K562 (cell line): ENCODE measurements at regions of chr20 and their contacts with region 1.

Region 1: GRCh38 chr20:25399037-25399430 is 8.4 kb upstream of the ABHD12 start:
- DNase-seq: peak; percentile 21 to 60 (median 28)
- ATAC-seq: peak; percentile 87
- H3K4me3 ChIP-seq: no peak overlapping the region
- H3K27ac ChIP-seq: no peak overlapping the region
- H3K4me1 ChIP-seq: no peaks in the 10 kb centered on the region; a peak in 1 of 5 replicates
- H3K27me3 ChIP-seq: no peaks in the 10 kb centered on the region
- CTCF ChIP-seq: peak; percentile 46 to 66 (median 48); a peak in 5 of 6 replicates
- EP300 ChIP-seq: no peak
- POLR2A ChIP-seq: no peak
- RAD21 ChIP-seq: peak; percentile 68 to 80

Region 2: DNA sequence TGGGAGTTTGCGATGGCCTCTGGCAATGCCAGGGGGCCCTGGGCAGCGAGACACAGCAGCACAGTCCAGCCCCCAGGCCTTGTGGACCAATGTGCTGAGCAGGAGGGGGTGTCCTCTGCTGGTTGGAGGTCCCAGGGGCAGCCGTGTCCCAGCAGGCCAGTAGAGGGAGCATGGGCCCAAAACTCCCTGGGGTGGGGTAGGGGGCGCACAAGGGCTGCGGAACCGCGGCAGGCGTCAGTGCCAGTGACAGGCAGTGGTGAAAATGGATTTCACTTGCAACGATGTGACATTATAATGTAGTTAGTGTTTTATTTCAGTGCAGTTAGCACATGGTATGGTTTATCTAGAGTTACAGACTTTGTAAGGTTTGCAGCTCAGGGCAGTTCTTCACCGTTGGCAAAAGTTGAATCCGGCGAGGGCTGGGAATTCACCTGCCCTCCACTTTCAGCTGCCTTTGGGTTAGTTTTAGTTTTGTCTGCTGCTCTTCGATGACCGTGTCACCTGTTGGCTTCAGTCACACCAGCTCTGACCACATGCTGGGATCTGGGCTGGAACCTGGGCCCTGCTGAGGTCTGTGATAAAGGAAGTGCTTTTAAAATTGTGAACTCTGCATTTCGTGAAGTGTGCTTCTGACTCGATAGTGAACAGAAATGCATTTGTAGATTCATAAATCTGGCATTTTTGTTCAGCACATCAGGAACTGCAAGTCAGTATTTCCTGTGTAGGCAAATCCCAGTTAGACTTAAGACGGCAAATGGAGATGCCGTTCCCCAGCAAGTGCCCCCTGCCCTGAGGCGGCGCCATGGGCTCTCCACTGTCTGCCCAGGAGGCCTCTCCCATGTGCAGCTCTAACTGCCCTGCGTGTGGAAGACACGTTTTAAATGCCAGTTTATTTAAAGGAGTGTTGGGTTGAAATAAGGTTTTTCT is 104.3 kb before region 1 on chr20:
- CTCF ChIA-PET with region 1: interaction called, 13 read pairs
- POLR2A ChIA-PET with region 1: no interaction called
- in situ Hi-C with region 1: no loop called
- intact Hi-C with region 1: loop called (anchors 2 kb)
- DNase-seq: peak; percentile 72 to 83 (median 79)
- ATAC-seq: peak; percentile 96
- H3K4me3 ChIP-seq: no peak overlapping the region
- H3K27ac ChIP-seq: no peak overlapping the region
- H3K4me1 ChIP-seq: peaks cover 0 to 11% of the 10 kb centered on the region in 2 experiments; a peak in 3 of 5 replicates
- H3K27me3 ChIP-seq: no peaks in the 10 kb centered on the region
- CTCF ChIP-seq: peak; percentile 94 to 100 (median 100)
- EP300 ChIP-seq: no peak
- POLR2A ChIP-seq: no peak
- RAD21 ChIP-seq: peak; percentile 42 to 84

Region 3: DNA sequence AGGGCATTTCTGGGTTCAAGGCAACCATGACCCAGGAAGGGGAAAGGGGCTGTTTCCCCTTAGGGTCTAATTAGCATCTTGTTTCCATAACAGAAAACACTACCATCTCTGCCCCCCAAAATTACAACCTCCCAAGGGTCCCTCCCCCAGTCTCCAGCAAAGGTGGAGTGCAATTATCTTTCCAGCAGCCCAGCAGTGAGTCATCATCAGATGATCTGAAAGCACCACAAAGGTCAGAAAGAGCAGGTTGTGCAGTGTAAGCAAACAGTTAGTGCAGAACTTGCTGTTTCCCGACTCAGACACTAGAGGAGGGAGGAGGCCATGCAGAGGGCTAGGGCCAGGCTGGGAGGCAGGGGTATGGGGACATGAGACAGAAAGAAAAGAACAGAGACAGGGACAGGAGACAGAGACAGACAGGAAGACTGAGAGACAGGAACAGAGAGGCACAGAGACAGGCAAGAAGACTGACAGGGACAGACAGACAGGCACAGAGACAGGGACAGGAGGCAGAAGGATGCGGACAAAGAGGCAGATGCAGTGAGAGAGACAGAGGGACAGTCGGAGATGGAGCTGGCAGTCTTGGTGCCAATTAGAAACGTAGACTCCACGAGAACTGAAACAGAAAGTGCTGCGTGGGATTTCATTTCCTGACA is 88.6 kb before region 1 on chr20:
- CTCF ChIA-PET with region 1: no interaction called
- POLR2A ChIA-PET with region 1: no interaction called
- in situ Hi-C with region 1: no loop called
- intact Hi-C with region 1: loop called (anchors 1 kb)
- DNase-seq: peak; percentile 61 to 88 (median 70)
- ATAC-seq: peak; percentile 98
- H3K4me3 ChIP-seq: peak overlapping the region; percentile 6; the same call in 1 of the 2 replicates
- H3K27ac ChIP-seq: peak overlapping the region; percentile 74
- H3K4me1 ChIP-seq: peaks cover 32 to 41% of the 10 kb centered on the region in 2 experiments
- H3K27me3 ChIP-seq: no peaks in the 10 kb centered on the region
- CTCF ChIP-seq: peak; percentile 72 to 75 (median 74)
- EP300 ChIP-seq: peak; percentile 80
- POLR2A ChIP-seq: no peak
- RAD21 ChIP-seq: peak; percentile 78 to 84

Region 4: GRCh38 chr20:25336561-25337422 is 62.2 kb before region 1 on chr20:
- CTCF ChIA-PET with region 1: interaction called, 7 read pairs
- POLR2A ChIA-PET with region 1: no interaction called
- in situ Hi-C with region 1: no loop called
- intact Hi-C with region 1: loop called (anchors 1 kb)
- DNase-seq: peak in 2 of 4 experiments; percentile 14 to 41
- ATAC-seq: peak; percentile 84
- H3K4me3 ChIP-seq: no peak overlapping the region
- H3K27ac ChIP-seq: no peak overlapping the region
- H3K4me1 ChIP-seq: no peaks in the 10 kb centered on the region; a peak in 1 of 5 replicates
- H3K27me3 ChIP-seq: no peaks in the 10 kb centered on the region
- CTCF ChIP-seq: peak; percentile 30 to 55 (median 44); a peak in 3 of 6 replicates
- EP300 ChIP-seq: no peak
- POLR2A ChIP-seq: no peak
- RAD21 ChIP-seq: peak; percentile 43 to 54; a peak in 3 of 4 replicates

Region 5: GRCh38 chr20:25525295-25526266 is 126.5 kb after region 1 on chr20:
- CTCF ChIA-PET with region 1: no interaction called
- POLR2A ChIA-PET with region 1: no interaction called
- in situ Hi-C with region 1: no loop called
- intact Hi-C with region 1: no loop called
- DNase-seq: no peak
- ATAC-seq: no peak
- H3K4me3 ChIP-seq: no peak overlapping the region
- H3K27ac ChIP-seq: no peak overlapping the region
- H3K4me1 ChIP-seq: no peaks in the 10 kb centered on the region
- H3K27me3 ChIP-seq: peaks cover 0 to 13% of the 10 kb centered on the region in 2 experiments; a peak in 3 of 5 replicates
- CTCF ChIP-seq: no peak
- EP300 ChIP-seq: no peak
- POLR2A ChIP-seq: no peak
- RAD21 ChIP-seq: no peak